CD4-positive, alpha-beta T cell (primary cell): ENCODE measurements at regions of chr10 and their contacts with region 1.

Region 1: GRCh38 chr10:117496616-117497028 is 45.9 kb upstream of the EMX2 start:
- DNase-seq: peak; percentile 40 to 80 (median 62)
- ATAC-seq: peak; percentile 82
- H3K4me3 ChIP-seq: no peak overlapping the region
- H3K4me3 Mint-ChIP-seq: no peak overlapping the region
- H3K27ac ChIP-seq: no peak overlapping the region
- H3K27ac Mint-ChIP-seq: no peak overlapping the region
- H3K4me1 ChIP-seq: no peaks in the 10 kb centered on the region
- H3K4me1 Mint-ChIP-seq: no peaks in the 10 kb centered on the region
- H3K27me3 ChIP-seq: no peaks in the 10 kb centered on the region
- H3K27me3 Mint-ChIP-seq: peaks cover 46% of the 10 kb centered on the region
- CTCF ChIP-seq: peak; percentile 95

Region 2: DNA sequence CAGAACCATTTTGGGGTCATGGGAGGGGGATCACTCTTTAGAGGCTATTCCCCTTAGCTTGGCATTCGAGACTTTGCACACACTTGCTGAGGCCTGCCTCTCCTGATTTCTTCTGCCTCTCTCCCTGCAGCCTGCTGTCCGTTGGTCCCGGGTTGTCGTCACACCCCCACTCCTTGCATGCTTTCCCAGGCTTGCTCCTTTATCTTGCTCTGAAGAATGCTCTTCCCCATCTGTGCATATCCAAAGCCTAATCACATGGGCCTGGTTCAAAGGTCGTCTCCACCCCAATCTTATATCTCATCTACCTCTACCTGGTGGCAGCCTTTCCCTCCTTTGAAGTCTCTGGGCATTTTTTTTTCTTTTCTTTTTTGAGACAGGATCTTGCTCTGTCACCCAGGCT is 21.6 kb after region 1 on chr10:
- CTCF ChIA-PET with region 1: no interaction called
- POLR2A ChIA-PET with region 1: no interaction called
- intact Hi-C with region 1: no loop called
- DNase-seq: no peak
- ATAC-seq: no peak
- H3K4me3 ChIP-seq: no peak overlapping the region
- H3K4me3 Mint-ChIP-seq: no peak overlapping the region
- H3K27ac ChIP-seq: no peak overlapping the region
- H3K27ac Mint-ChIP-seq: no peak overlapping the region
- H3K4me1 ChIP-seq: no peaks in the 10 kb centered on the region
- H3K4me1 Mint-ChIP-seq: no peaks in the 10 kb centered on the region
- H3K27me3 ChIP-seq: peaks cover 12 to 41% of the 10 kb centered on the region in 2 experiments
- H3K27me3 Mint-ChIP-seq: peaks cover 70% of the 10 kb centered on the region
- CTCF ChIP-seq: no peak

Region 3: GRCh38 chr10:117775526-117775925 is 278.9 kb after region 1 on chr10:
- CTCF ChIA-PET with region 1: no interaction called
- POLR2A ChIA-PET with region 1: no interaction called
- intact Hi-C with region 1: no loop called
- DNase-seq: no peak
- ATAC-seq: no peak
- H3K4me3 ChIP-seq: no peak overlapping the region
- H3K4me3 Mint-ChIP-seq: no peak overlapping the region
- H3K27ac ChIP-seq: no peak overlapping the region
- H3K27ac Mint-ChIP-seq: no peak overlapping the region
- H3K4me1 ChIP-seq: no peaks in the 10 kb centered on the region
- H3K4me1 Mint-ChIP-seq: no peaks in the 10 kb centered on the region
- H3K27me3 ChIP-seq: peaks cover 0 to 3% of the 10 kb centered on the region in 2 experiments
- H3K27me3 Mint-ChIP-seq: peaks cover 17% of the 10 kb centered on the region
- CTCF ChIP-seq: no peak

Region 4: DNA sequence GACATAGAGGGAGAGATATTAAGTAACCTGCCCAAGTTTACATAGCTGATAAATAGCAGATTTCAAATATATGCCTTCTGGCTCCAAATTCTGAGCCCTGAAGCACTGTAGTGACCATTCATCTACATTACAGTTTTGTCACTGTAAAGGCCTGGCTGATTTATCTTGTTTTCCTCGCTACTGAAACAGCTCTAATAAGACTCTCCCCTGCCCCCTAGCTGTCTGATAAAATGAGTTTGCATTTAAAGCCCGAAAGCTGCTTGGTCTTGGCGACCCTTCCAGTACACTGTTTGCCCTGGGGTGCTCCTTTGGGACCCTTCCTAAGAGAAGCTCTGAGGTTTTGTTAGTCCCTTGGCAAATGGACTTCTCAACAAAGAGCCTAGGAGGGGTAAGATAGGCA is 609.8 kb after region 1 on chr10:
- CTCF ChIA-PET with region 1: interaction called, 3 read pairs
- POLR2A ChIA-PET with region 1: no interaction called
- intact Hi-C with region 1: loop called (anchors 5 to 10 kb)
- DNase-seq: peak in 4 of 14 experiments; percentile 3 to 18 (median 11)
- ATAC-seq: no peak
- H3K4me3 ChIP-seq: no peak overlapping the region
- H3K4me3 Mint-ChIP-seq: no peak overlapping the region
- H3K27ac ChIP-seq: no peak overlapping the region
- H3K27ac Mint-ChIP-seq: no peak overlapping the region
- H3K4me1 ChIP-seq: no peaks in the 10 kb centered on the region
- H3K4me1 Mint-ChIP-seq: no peaks in the 10 kb centered on the region
- H3K27me3 ChIP-seq: peaks cover 5 to 11% of the 10 kb centered on the region in 2 experiments
- H3K27me3 Mint-ChIP-seq: peaks cover 23% of the 10 kb centered on the region
- CTCF ChIP-seq: peak; percentile 20

Region 5: DNA sequence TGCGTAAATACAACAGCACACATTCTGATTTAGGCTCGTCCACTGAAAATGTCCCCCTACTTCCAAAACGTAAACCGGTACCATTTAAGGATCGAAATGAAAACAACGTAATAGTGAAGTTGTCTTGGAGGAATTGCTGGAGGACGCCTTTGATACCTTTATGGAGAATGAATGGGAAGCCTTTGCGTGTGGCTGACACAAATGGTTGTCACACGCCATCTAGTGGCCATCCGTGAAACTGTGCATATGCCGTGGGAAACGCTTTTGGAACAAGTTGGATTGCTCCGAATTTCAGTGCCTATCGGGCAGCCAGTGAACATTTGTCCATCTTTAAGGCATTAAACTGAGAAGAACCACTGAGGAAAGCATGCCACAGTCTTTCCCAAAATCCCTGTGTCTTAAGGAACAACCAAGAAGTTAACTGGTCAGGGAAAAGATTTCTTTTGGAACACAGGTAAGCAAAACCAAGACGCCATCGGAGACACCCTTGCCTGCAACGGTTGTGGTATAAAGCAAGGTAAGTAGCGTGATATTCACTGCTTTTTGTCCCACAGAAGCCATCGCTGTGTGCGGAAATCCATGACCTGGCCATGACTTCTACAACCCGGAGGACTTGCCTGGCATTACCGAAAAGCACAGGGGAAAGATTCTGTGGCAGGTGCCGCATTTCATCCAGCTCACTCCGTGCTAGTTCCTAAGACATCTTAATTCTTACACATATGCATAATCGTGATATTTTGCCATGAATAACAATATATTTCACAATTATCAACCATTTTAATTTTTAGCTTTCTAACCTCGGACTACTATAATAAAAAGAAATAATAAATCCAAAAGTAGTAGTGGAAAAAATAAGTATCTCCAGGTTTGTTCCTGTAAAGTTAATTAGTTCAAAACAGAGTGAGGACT is 744.9 kb after region 1 on chr10:
- CTCF ChIA-PET with region 1: interaction called, 18 read pairs
- POLR2A ChIA-PET with region 1: interaction called, 3 read pairs
- intact Hi-C with region 1: loop called (anchors 1 kb)
- DNase-seq: peak; percentile 42 to 77 (median 54)
- ATAC-seq: no peak
- H3K4me3 ChIP-seq: no peak overlapping the region
- H3K4me3 Mint-ChIP-seq: no peak overlapping the region
- H3K27ac ChIP-seq: no peak overlapping the region
- H3K27ac Mint-ChIP-seq: no peak overlapping the region
- H3K4me1 ChIP-seq: no peaks in the 10 kb centered on the region
- H3K4me1 Mint-ChIP-seq: no peaks in the 10 kb centered on the region
- H3K27me3 ChIP-seq: peaks cover 15 to 24% of the 10 kb centered on the region in 2 experiments
- H3K27me3 Mint-ChIP-seq: peaks cover 77% of the 10 kb centered on the region
- CTCF ChIP-seq: peak; percentile 99

Region 6: DNA sequence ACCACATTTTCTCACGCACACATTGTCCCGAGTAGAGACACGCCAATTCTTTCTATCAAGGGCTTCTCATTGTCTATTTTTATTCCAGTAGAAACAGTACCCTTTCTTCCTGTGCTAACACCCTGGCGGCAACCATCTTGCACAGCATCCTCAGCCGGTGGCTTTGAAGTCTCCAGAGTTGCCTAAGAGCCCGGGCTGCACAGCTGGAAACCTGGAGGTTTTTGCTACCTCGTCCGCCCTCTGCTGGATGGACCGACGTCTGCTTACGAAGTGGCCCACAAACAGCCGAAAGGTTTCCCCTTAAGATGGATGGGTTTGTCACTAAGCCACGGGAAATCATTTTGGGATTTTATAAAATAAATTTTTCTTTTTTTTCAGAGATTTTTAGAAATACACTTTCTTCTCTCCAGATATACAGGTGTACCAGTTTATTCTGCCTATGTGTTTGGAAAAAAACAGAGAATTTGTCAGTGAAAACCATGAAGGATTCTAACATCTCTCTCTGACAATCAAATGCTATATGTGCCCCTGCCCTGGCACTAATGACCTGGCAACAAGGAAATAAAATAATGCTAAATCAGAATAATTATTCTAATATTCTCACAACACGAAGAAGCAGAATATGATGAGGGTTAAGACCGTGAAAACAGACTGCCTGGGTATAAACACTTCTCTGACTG is 927.3 kb after region 1 on chr10:
- CTCF ChIA-PET with region 1: no interaction called
- POLR2A ChIA-PET with region 1: no interaction called
- intact Hi-C with region 1: loop called (anchors 1 to 5 kb)
- DNase-seq: peak; percentile 28 to 78 (median 44)
- ATAC-seq: peak; percentile 92
- H3K4me3 ChIP-seq: no peak overlapping the region
- H3K4me3 Mint-ChIP-seq: no peak overlapping the region
- H3K27ac ChIP-seq: no peak overlapping the region
- H3K27ac Mint-ChIP-seq: no peak overlapping the region
- H3K4me1 ChIP-seq: peaks cover 3% of the 10 kb centered on the region
- H3K4me1 Mint-ChIP-seq: no peaks in the 10 kb centered on the region
- H3K27me3 ChIP-seq: peaks cover 0 to 9% of the 10 kb centered on the region in 2 experiments
- H3K27me3 Mint-ChIP-seq: peaks cover 22% of the 10 kb centered on the region
- CTCF ChIP-seq: peak; percentile 74

Region 7: DNA sequence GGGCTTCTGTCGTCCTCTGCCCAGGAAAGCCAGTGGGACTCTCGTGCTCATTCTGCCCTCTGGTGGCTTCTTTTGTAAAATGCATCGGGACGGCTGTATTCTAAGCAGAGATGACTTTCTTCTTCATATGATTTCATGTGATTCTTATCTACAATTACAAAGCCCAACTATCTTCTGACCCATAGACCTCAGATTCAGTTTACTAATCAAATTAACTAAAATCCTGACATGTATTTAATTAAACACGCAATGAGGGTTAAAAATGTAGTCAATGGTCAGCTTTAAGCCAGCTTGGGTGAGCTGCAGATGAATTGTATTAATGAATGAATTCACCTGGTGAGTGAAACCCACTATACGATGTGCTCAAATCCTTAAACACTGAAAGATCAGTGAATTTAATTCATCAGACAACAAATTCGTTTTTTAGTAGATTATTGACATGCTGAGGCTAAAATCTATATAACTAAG is 963.1 kb after region 1 on chr10:
- CTCF ChIA-PET with region 1: interaction called, 26 read pairs
- POLR2A ChIA-PET with region 1: no interaction called
- intact Hi-C with region 1: loop called (anchors 1 to 2 kb)
- DNase-seq: peak; percentile 17 to 65 (median 28)
- ATAC-seq: peak; percentile 51
- H3K4me3 ChIP-seq: peak overlapping the region; percentile 12
- H3K4me3 Mint-ChIP-seq: peak overlapping the region; percentile 66
- H3K27ac ChIP-seq: no peak overlapping the region
- H3K27ac Mint-ChIP-seq: no peak overlapping the region
- H3K4me1 ChIP-seq: peaks cover 3% of the 10 kb centered on the region
- H3K4me1 Mint-ChIP-seq: no peaks in the 10 kb centered on the region
- H3K27me3 ChIP-seq: peaks cover 3 to 8% of the 10 kb centered on the region in 2 experiments
- H3K27me3 Mint-ChIP-seq: peaks cover 53% of the 10 kb centered on the region
- CTCF ChIP-seq: peak; percentile 75

Region 8: GRCh38 chr10:118543714-118544400 is 1047.2 kb after region 1 on chr10:
- CTCF ChIA-PET with region 1: no interaction called
- POLR2A ChIA-PET with region 1: no interaction called
- intact Hi-C with region 1: loop called (anchors 5 to 10 kb)
- DNase-seq: peak; percentile 9 to 60 (median 25)
- ATAC-seq: peak; percentile 59
- H3K4me3 ChIP-seq: no peak overlapping the region
- H3K4me3 Mint-ChIP-seq: no peak overlapping the region
- H3K27ac ChIP-seq: no peak overlapping the region
- H3K27ac Mint-ChIP-seq: no peak overlapping the region
- H3K4me1 ChIP-seq: no peaks in the 10 kb centered on the region
- H3K4me1 Mint-ChIP-seq: no peaks in the 10 kb centered on the region
- H3K27me3 ChIP-seq: peaks cover 16 to 47% of the 10 kb centered on the region in 2 experiments
- H3K27me3 Mint-ChIP-seq: peaks cover 82% of the 10 kb centered on the region
- CTCF ChIP-seq: peak; percentile 51